ENCODE measurements at regions of chr15 and their contacts with region 1.

Region 1: GRCh38 chr15:56052395-56053045 is 59.1 kb upstream of the NEDD4 start:
- DNase-seq: no peak
- H3K4me3 ChIP-seq: no peak overlapping the region
- H3K27ac ChIP-seq: no peak overlapping the region
- H3K27me3 ChIP-seq: no peaks in the 10 kb centered on the region
- CTCF ChIP-seq: peak; percentile 54 to 94 (median 78)

Region 2: DNA sequence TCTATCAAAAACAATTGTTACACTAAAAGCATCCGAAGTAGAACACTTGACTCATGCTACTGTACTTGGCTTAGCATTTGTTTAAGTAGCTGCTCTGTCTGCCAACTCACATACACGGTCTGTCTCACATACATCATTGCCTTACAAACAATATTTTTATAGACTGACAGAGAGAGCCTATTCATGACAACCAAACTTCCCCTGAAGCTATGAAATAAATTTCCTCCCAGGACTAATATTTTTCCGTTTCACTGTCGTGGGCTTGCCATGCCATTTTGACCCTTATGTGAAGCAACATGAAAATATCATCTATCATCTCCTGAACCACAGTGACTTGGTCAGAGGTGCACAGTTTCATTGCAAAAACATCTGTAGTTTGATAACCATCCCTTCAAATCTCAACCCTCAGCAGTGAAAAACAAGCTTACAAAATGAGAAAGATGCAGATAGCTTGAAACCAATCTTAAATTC is 397.9 kb before region 1 on chr15:
- intact Hi-C with region 1: loop called in 1 of 2 experiments (anchors 10 kb)
- DNase-seq: no peak
- H3K4me3 ChIP-seq: no peak overlapping the region
- H3K27ac ChIP-seq: no peak overlapping the region
- H3K27me3 ChIP-seq: no peaks in the 10 kb centered on the region
- CTCF ChIP-seq: no peak

Region 3: GRCh38 chr15:56222302-56222701 is 169.8 kb after region 1 on chr15:
- intact Hi-C with region 1: no loop called
- DNase-seq: no peak
- H3K4me3 ChIP-seq: no peak overlapping the region
- H3K27ac ChIP-seq: no peak overlapping the region
- H3K27me3 ChIP-seq: no peaks in the 10 kb centered on the region
- CTCF ChIP-seq: no peak